PC-9 (cell line): ENCODE measurements at regions of chr1 and their contacts with region 1.

Region 1: DNA sequence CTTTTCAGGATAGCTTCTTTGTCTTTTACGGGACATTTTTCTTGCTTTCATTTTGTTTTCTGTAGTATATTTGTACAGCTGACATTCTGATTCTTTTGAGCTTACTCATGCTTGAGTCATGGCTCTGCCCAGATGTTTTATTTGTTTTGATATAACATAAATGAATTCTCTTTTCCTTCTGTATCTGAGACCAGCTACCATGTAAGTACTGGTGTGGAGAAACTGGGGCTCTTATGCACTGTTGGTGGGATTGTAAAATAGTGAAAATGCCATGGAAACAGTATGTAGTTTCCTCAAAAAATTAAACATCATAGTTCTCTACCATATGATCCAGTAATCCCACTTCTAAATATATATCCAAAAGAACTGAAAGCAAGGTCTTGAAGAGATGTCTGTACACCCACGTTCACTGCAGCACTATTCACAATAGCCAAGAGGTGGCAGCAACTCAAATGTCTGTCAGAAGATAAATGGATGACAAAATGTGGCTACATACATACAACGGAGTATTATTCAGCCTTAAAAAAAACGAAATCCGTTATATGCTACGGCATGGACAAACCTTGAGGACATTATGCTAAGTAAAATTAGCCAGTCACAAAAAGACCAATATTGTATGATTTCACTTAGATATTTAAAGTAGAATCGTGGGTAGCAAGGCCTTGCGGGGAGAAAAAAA is 61.4 kb downstream of the EIF2B3 start:
- DNase-seq: peak; percentile 8 to 44
- H3K4me3 ChIP-seq: no peak overlapping the region
- H3K27ac ChIP-seq: no peak overlapping the region
- H3K4me1 ChIP-seq: peaks cover 10% of the 10 kb centered on the region; the same call in 1 of the 2 replicates
- H3K27me3 ChIP-seq: no peaks in the 10 kb centered on the region
- CTCF ChIP-seq: peak; percentile 54; the same call in 1 of the 2 replicates

Region 2: GRCh38 chr1:44949286-44949685 is 24.3 kb after region 1 on chr1:
- CTCF ChIA-PET with region 1: no interaction called
- POLR2A ChIA-PET with region 1: no interaction called
- intact Hi-C with region 1: no loop called
- DNase-seq: no peak
- H3K4me3 ChIP-seq: no peak overlapping the region
- H3K27ac ChIP-seq: no peak overlapping the region
- H3K4me1 ChIP-seq: no peaks in the 10 kb centered on the region
- H3K27me3 ChIP-seq: no peaks in the 10 kb centered on the region
- CTCF ChIP-seq: no peak

Region 3: GRCh38 chr1:45152126-45152525 is 227.2 kb after region 1 on chr1:
- CTCF ChIA-PET with region 1: no interaction called
- POLR2A ChIA-PET with region 1: no interaction called
- intact Hi-C with region 1: no loop called
- DNase-seq: no peak
- H3K4me3 ChIP-seq: no peak overlapping the region
- H3K27ac ChIP-seq: no peak overlapping the region
- H3K4me1 ChIP-seq: no peaks in the 10 kb centered on the region
- H3K27me3 ChIP-seq: no peaks in the 10 kb centered on the region
- CTCF ChIP-seq: no peak

Region 4: DNA sequence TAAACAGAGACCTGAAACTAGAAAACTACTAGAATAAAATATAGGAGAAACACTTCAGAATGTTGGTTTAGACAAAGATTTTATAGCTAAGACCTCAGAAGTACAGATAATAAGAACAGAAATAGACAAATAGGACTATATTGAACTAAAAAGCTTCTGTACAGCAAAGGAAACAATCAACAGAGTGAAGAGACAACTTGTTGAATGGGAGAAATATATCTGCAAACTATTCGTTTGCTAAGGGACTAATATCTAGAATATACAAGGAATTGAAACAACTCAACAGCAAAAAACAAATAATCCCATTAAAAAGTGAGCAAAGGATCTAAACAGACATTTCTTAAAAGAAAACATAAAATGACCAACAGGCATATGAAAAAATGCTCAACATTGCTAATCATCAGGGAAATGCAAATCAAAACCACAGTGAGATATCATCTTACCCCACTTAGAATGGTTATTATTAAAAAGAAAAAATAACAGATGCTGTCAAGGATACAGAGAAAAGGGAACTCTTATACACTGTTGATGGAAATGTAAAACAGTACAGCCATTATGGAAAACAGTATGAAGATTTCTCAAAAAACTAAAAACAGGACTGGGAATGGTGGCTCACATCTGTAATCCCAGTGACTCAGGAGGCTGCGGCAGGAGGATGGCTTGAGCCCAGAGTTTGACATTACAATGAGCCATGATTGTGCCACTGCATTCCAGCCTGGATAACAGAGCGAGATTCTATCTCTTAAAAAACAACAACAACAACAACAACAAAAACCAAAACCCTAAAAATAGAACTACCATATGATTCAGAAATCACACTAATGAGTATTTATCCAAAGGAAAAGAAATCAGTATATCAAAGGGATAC is 318.7 kb after region 1 on chr1:
- CTCF ChIA-PET with region 1: interaction called, 10 read pairs
- POLR2A ChIA-PET with region 1: no interaction called
- intact Hi-C with region 1: no loop called
- DNase-seq: no peak
- H3K4me3 ChIP-seq: no peak overlapping the region
- H3K27ac ChIP-seq: no peak overlapping the region
- H3K4me1 ChIP-seq: peaks cover 12% of the 10 kb centered on the region; the same call in 1 of the 2 replicates
- H3K27me3 ChIP-seq: no peaks in the 10 kb centered on the region
- CTCF ChIP-seq: no peak

Region 5: GRCh38 chr1:46278807-46279206 is 1353.8 kb after region 1 on chr1:
- CTCF ChIA-PET with region 1: no interaction called
- POLR2A ChIA-PET with region 1: interaction called, 21 read pairs
- intact Hi-C with region 1: no loop called
- DNase-seq: peak in 1 of 2 experiments; percentile 65
- H3K4me3 ChIP-seq: no peak overlapping the region
- H3K27ac ChIP-seq: no peak overlapping the region
- H3K4me1 ChIP-seq: no peaks in the 10 kb centered on the region
- H3K27me3 ChIP-seq: no peaks in the 10 kb centered on the region
- CTCF ChIP-seq: no peak